Activated CD4-positive, alpha-beta memory T cell treated with anti-CD3 and anti-CD28 coated beads, Interleukin-2, amount 10 ng/mL, durations not matched to agents 7 days and 5 days (primary cell): ENCODE measurements at regions of chr1 and their contacts with region 1.

Region 1: GRCh38 chr1:31961536-31961935 is 23.4 kb upstream of the PTP4A2 start:
- DNase-seq: no peak
- H3K4me3 Mint-ChIP-seq: no peak overlapping the region
- H3K27ac Mint-ChIP-seq: peak overlapping the region; percentile 64
- H3K4me1 Mint-ChIP-seq: peaks cover 71% of the 10 kb centered on the region
- H3K27me3 Mint-ChIP-seq: no peaks in the 10 kb centered on the region

Region 2: GRCh38 chr1:31723828-31724359 is 237.6 kb before region 1 on chr1:
- CTCF ChIA-PET with region 1: no interaction called
- POLR2A ChIA-PET with region 1: no interaction called
- DNase-seq: peak; percentile 67
- H3K4me3 Mint-ChIP-seq: no peak overlapping the region
- H3K27ac Mint-ChIP-seq: no peak overlapping the region
- H3K4me1 Mint-ChIP-seq: no peaks in the 10 kb centered on the region
- H3K27me3 Mint-ChIP-seq: peaks cover 16% of the 10 kb centered on the region

Region 3: DNA sequence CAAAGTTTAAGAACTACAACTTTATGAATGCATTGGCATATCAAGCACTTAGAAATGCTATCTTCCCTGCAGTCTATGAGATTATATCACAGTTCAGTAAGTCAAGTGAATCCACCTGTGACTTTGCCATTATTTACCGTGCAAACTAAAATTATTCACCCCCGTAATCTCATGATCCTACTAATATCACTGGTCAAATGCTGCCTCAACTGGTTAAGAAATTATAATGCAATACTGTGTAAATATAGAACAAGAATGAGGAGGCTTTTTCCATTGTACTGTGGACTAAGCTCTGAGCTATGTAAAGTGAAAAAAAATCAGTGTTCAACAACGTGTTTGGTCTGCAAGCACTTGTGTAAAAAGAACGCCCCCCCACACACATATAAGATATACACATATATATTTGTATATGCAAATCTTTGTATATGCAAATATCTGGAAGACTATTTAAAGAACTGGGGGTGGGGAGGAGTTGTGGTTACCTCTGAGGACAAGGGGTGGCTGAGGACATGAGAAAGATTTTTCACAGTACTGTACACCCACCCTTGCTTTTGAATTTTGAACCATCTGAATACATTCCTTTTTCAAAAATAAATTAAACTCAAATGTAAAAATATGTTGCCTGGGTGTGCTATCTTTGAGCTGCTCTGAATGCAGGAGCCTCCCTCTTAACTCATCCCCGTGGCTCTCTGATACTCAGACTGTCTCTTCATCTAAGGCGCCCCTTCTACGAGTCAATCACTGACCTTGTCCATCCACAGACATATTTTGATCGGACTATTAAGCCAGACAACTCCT is 80.4 kb before region 1 on chr1:
- CTCF ChIA-PET with region 1: no interaction called
- POLR2A ChIA-PET with region 1: no interaction called
- DNase-seq: no peak
- H3K4me3 Mint-ChIP-seq: no peak overlapping the region
- H3K27ac Mint-ChIP-seq: no peak overlapping the region
- H3K4me1 Mint-ChIP-seq: no peaks in the 10 kb centered on the region
- H3K27me3 Mint-ChIP-seq: peaks cover 6% of the 10 kb centered on the region

Region 4: DNA sequence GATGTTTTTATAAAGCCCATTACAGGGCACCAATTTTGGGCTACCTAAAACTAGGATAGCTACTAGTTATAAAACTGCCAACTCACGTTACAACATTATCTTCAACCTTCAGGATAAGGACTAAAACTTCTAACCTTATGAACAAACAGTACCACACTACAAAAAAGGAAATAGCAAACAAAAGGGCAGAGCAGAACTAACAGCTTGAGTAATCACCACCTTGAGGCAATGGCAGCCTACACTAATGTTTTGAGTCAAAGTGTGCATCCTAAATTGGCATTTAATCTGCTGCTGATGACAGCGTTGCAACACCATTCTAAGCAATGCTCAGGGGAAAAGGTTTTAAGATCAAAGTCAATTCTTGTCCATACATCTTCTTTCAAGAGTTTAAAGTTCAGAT is 50.6 kb before region 1 on chr1:
- CTCF ChIA-PET with region 1: interaction called, 24 read pairs
- POLR2A ChIA-PET with region 1: interaction called, 9 read pairs
- DNase-seq: no peak
- H3K4me3 Mint-ChIP-seq: no peak overlapping the region
- H3K27ac Mint-ChIP-seq: peak overlapping the region; percentile 61
- H3K4me1 Mint-ChIP-seq: peaks cover 51% of the 10 kb centered on the region
- H3K27me3 Mint-ChIP-seq: no peaks in the 10 kb centered on the region

Region 5: DNA sequence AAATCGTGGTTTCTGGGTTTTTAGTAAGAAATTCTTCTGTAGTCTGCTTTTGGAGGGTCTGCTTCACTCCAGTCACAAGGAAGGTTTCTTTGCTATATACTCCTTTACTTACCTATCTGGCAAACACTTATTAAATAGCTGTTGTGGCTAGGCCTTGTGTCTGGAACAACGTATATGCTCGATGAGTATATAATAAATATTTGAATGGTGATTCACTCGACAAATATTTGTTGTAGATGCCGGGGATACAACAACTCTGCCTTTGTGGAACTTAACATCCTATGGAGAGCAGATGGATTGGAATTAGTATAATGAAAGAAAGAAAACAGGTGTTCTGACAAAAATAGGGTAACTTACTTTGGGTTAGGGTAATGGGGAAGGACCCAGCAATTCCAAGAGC is 177.4 kb after region 1 on chr1:
- CTCF ChIA-PET with region 1: no interaction called
- POLR2A ChIA-PET with region 1: no interaction called
- DNase-seq: no peak
- H3K4me3 Mint-ChIP-seq: no peak overlapping the region
- H3K27ac Mint-ChIP-seq: no peak overlapping the region
- H3K4me1 Mint-ChIP-seq: peaks cover 35% of the 10 kb centered on the region
- H3K27me3 Mint-ChIP-seq: no peaks in the 10 kb centered on the region